H1 (cell line): ENCODE measurements at regions of chr5 and their contacts with region 1.

Region 1: GRCh38 chr5:146041180-146041789 is 64.1 kb downstream of the PLAC8L1 start:
- DNase-seq: no peak
- H3K4me3 ChIP-seq: no peak overlapping the region
- H3K27ac ChIP-seq: no peak overlapping the region
- H3K4me1 ChIP-seq: no peaks in the 10 kb centered on the region
- H3K27me3 ChIP-seq: no peaks in the 10 kb centered on the region
- CTCF ChIP-seq: peak in 2 of 3 experiments; percentile 34 to 52; a peak in 2 of 4 replicates
- EP300 ChIP-seq: no peak
- POLR2A ChIP-seq: no peak
- RAD21 ChIP-seq: peak; percentile 37 to 41

Region 2: GRCh38 chr5:145825751-145826180 is 215.5 kb before region 1 on chr5:
- CTCF ChIA-PET with region 1: interaction called, 15 read pairs
- POLR2A ChIA-PET with region 1: no interaction called
- DNase-seq: no peak
- H3K4me3 ChIP-seq: no peak overlapping the region
- H3K27ac ChIP-seq: no peak overlapping the region
- H3K4me1 ChIP-seq: no peaks in the 10 kb centered on the region
- H3K27me3 ChIP-seq: no peaks in the 10 kb centered on the region; a peak in 1 of 7 replicates
- CTCF ChIP-seq: peak in 2 of 3 experiments; percentile 65 to 89; a peak in 3 of 4 replicates
- EP300 ChIP-seq: no peak
- POLR2A ChIP-seq: no peak
- RAD21 ChIP-seq: peak; percentile 67 to 72

Region 3: GRCh38 chr5:145903113-145903512 is 138.2 kb before region 1 on chr5:
- CTCF ChIA-PET with region 1: interaction called, 31 read pairs
- POLR2A ChIA-PET with region 1: no interaction called
- DNase-seq: no peak
- H3K4me3 ChIP-seq: no peak overlapping the region
- H3K27ac ChIP-seq: no peak overlapping the region
- H3K4me1 ChIP-seq: no peaks in the 10 kb centered on the region
- H3K27me3 ChIP-seq: no peaks in the 10 kb centered on the region
- CTCF ChIP-seq: peak in 2 of 3 experiments; percentile 7 to 39; a peak in 2 of 4 replicates
- EP300 ChIP-seq: no peak
- POLR2A ChIP-seq: no peak
- RAD21 ChIP-seq: 0 out of 4 replicates have a peak, but pooled peaks have one; percentile 13 to 15

Region 4: DNA sequence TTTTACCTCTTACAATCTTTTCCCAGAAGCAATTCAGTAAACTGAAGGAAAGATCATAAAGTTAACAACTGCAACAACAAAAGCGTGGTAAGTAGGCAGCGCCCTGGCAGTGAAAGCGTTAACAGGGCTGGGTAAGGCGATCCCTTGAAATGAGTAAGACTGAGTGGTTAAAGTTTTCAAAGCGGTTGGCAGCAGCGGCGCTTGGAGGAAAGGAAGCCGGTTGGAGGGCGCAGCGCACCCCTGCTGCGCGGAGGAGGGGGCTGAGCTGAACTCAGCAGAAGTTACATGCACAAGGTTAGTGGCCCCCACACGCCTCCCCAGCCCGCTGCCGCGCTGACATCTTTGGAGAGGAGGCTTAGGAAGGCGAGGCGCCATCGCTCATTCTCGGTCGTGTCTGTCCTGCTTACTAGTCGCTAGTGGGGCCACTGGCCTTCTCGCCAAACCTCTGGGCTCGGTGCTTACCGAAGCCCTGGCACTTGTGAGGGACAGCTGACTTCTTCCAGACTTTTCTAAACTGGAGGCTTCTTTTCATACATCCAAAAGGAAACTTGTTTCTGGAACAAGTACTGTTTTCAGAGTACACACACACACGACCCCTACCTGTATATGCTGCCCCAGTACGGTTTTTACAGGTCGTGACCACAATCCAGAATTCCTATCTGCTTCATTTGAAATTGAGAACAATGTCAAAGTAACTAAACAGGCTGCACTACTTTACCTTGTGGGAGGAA is 104.7 kb before region 1 on chr5 and contains the start of gene SH3RF2:
- CTCF ChIA-PET with region 1: interaction called, 22 read pairs
- POLR2A ChIA-PET with region 1: no interaction called
- DNase-seq: peak; percentile 94 to 95
- H3K4me3 ChIP-seq: peak within 1 kb of the TSS; percentile 38 to 57 (median 49)
- H3K27ac ChIP-seq: peak within 1 kb of the TSS; percentile 58; the same call in 1 of the 2 replicates
- H3K4me1 ChIP-seq: peaks cover 12 to 19% (median 14%) of the 10 kb centered on the region in 4 experiments
- H3K27me3 ChIP-seq: peaks cover 0 to 5% (median 0%) of the 10 kb centered on the region in 4 experiments; a peak in 2 of 7 replicates
- CTCF ChIP-seq: no peak
- EP300 ChIP-seq: no peak
- POLR2A ChIP-seq: peak in 1 of 2 experiments; percentile 84; a peak in 2 of 3 replicates
- RAD21 ChIP-seq: no peak
- total RNA-seq, gene SH3RF2: 0.65 and 0.95 TPM in 2 replicates

Region 5: DNA sequence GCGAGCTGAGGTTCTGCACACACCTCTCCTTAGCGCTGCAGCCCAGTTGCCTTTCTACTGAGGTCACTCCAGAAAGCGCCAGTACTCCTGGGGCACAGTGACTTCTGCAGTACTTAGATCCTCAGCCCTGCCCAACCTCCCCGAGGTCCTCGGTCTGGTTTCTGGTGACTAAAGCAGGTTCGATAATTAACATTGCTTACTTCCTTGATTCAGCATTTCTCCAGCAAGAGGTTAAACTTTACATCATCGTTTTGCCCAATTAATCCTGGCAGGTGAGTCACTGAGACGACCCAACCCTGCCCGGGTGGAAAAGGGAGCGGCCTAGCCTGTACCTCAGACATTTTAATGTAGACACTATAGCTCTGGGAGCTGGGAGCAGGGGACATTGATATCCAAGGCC is 13.5 kb before region 1 on chr5:
- CTCF ChIA-PET with region 1: interaction called, 40 read pairs
- POLR2A ChIA-PET with region 1: no interaction called
- DNase-seq: no peak
- H3K4me3 ChIP-seq: no peak overlapping the region
- H3K27ac ChIP-seq: no peak overlapping the region
- H3K4me1 ChIP-seq: peaks cover 2 to 31% (median 13%) of the 10 kb centered on the region in 4 experiments
- H3K27me3 ChIP-seq: no peaks in the 10 kb centered on the region
- CTCF ChIP-seq: no peak
- EP300 ChIP-seq: no peak
- POLR2A ChIP-seq: no peak
- RAD21 ChIP-seq: no peak

Region 6: DNA sequence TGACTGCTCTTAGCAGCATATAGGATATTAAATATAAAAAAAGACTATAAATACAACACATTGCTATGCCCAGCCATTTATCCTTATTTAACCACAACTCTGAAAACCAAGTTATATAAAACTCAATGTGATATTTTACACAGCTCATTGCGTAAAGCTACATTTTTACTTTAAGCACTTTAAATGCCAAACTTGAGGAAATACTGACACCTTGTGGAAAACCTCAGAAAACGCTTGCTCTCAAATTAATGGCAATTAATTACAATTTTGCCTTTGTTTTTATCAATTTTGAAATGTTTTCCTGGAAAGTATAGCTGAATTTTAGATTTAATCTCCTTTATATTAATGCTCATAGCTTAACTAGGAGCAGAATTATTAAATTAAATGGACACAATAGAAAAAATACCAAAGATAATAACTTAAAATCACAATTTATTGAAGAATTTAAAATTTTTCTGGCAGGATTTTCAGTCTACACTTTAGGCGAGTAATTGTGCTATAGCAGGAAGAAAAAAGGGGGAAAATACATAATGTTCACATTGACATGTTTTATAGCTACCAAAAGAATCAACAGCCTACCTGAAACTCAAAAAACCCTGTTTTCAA is 89.3 kb after region 1 on chr5:
- CTCF ChIA-PET with region 1: interaction called, 13 read pairs
- POLR2A ChIA-PET with region 1: no interaction called
- DNase-seq: no peak
- H3K4me3 ChIP-seq: no peak overlapping the region
- H3K27ac ChIP-seq: no peak overlapping the region
- H3K4me1 ChIP-seq: no peaks in the 10 kb centered on the region
- H3K27me3 ChIP-seq: no peaks in the 10 kb centered on the region
- CTCF ChIP-seq: peak in 2 of 3 experiments; percentile 25 to 61; a peak in 2 of 4 replicates
- EP300 ChIP-seq: no peak
- POLR2A ChIP-seq: no peak
- RAD21 ChIP-seq: peak; percentile 56 to 58

Region 7: GRCh38 chr5:146238973-146239372 is 197.7 kb after region 1 on chr5:
- CTCF ChIA-PET with region 1: no interaction called
- POLR2A ChIA-PET with region 1: no interaction called
- DNase-seq: no peak
- H3K4me3 ChIP-seq: no peak overlapping the region
- H3K27ac ChIP-seq: no peak overlapping the region
- H3K4me1 ChIP-seq: no peaks in the 10 kb centered on the region
- H3K27me3 ChIP-seq: no peaks in the 10 kb centered on the region
- CTCF ChIP-seq: no peak
- EP300 ChIP-seq: no peak
- POLR2A ChIP-seq: no peak
- RAD21 ChIP-seq: no peak

Region 8: GRCh38 chr5:146273109-146273508 is 231.8 kb after region 1 on chr5:
- CTCF ChIA-PET with region 1: no interaction called
- POLR2A ChIA-PET with region 1: no interaction called
- DNase-seq: no peak
- H3K4me3 ChIP-seq: no peak overlapping the region
- H3K27ac ChIP-seq: no peak overlapping the region
- H3K4me1 ChIP-seq: no peaks in the 10 kb centered on the region
- H3K27me3 ChIP-seq: no peaks in the 10 kb centered on the region
- CTCF ChIP-seq: no peak
- EP300 ChIP-seq: no peak
- POLR2A ChIP-seq: no peak
- RAD21 ChIP-seq: no peak